ENCODE measurements at regions of chr6 and their contacts with region 1.

Region 1: DNA sequence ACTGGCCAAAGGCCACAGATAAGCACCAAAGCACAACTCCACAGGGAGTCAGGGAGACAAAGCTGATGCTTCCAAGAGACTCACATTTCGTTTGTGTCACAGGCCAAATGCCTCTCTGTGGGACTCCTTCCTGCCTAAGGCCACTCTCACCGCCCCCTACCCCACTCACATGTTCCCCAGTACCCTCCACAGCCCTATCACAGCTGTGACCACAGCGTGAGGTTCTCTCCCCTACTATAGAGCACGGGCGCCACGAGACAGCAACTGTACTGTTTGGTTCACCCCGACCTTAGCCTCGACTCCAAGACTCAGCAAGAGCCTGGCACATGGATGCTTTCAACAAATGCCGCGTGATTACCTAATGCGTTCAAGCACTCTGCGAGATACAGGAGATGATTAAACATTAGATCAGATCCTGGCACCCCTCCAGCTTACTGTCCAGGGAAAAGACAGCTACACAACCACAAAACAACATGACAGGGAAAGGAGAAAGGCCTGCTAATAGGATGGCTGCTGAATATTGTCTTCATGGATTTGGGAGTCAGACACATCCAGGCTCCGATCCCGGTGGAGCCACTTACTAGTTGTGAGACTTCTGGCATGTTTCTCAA is 105.5 kb downstream of the AGPAT4 start:
- DNase-seq: no peak
- H3K4me3 ChIP-seq: no peak overlapping the region
- H3K27ac ChIP-seq: peak overlapping the region in 1 of 4 donors; percentile 40
- H3K4me1 ChIP-seq: peaks cover 0 to 23% (median 18%) of the 10 kb centered on the region in 4 donors
- H3K27me3 ChIP-seq: no peaks in the 10 kb centered on the region
- CTCF ChIP-seq: no peak
- EP300 ChIP-seq: no peak
- POLR2A ChIP-seq: no peak

Region 2: GRCh38 chr6:161181121-161181520 is 12.7 kb after region 1 on chr6:
- intact Hi-C with region 1: loop called (anchors 1 kb)
- DNase-seq: no peak
- H3K4me3 ChIP-seq: no peak overlapping the region
- H3K27ac ChIP-seq: no peak overlapping the region
- H3K4me1 ChIP-seq: no peaks in the 10 kb centered on the region
- H3K27me3 ChIP-seq: no peaks in the 10 kb centered on the region
- CTCF ChIP-seq: no peak
- EP300 ChIP-seq: no peak
- POLR2A ChIP-seq: no peak

Measured in sigmoid colon (tissue), 7 donors.